Mammary epithelial cell (primary cell): ENCODE measurements at regions of chr1 and their contacts with region 1.

Region 1: GRCh38 chr1:196951711-196952394 is 8.3 kb downstream of the CFHR2 start:
- DNase-seq: no peak
- H3K4me3 ChIP-seq: no peak overlapping the region
- H3K27ac ChIP-seq: no peak overlapping the region
- H3K4me1 ChIP-seq: no peaks in the 10 kb centered on the region
- H3K27me3 ChIP-seq: no peaks in the 10 kb centered on the region
- CTCF ChIP-seq: no peak

Region 2: DNA sequence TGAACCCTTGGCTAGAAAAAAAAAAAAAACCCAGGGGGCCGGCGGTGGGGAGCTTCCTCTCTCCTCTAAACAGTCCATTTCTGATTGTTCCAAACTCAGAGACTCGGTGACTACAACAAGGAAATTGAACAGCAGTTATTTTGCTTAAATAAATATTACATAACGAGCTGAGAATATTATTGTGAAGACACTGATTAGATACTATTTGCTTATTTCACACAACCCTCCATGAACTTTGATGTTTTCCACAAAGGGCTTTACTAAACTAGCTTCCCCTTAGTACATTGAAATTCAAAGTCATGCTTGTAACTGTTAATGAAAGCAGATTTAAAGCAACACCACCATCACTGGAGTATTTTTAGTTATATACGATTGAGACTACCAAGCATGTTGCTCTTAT is 25.4 kb after region 1 on chr1 and contains the start of gene CFHR5:
- CTCF ChIA-PET with region 1: no interaction called
- dilution Hi-C with region 1: no loop called
- in situ Hi-C with region 1: no loop called
- intact Hi-C with region 1: loop called (anchors 2 kb)
- DNase-seq: no peak
- H3K4me3 ChIP-seq: no peak within 1 kb of the TSS
- H3K27ac ChIP-seq: no peak within 1 kb of the TSS
- H3K4me1 ChIP-seq: no peaks in the 10 kb centered on the region
- H3K27me3 ChIP-seq: no peaks in the 10 kb centered on the region
- CTCF ChIP-seq: no peak
- total RNA-seq, gene CFHR5: not detected

Region 3: GRCh38 chr1:197327776-197328364 is 376.0 kb after region 1 on chr1:
- CTCF ChIA-PET with region 1: no interaction called
- dilution Hi-C with region 1: no loop called
- in situ Hi-C with region 1: no loop called
- intact Hi-C with region 1: no loop called
- DNase-seq: no peak
- H3K4me3 ChIP-seq: no peak overlapping the region
- H3K27ac ChIP-seq: no peak overlapping the region
- H3K4me1 ChIP-seq: no peaks in the 10 kb centered on the region
- H3K27me3 ChIP-seq: no peaks in the 10 kb centered on the region
- CTCF ChIP-seq: peak; percentile 55 to 59